Endothelial cell of umbilical vein (primary cell): ENCODE measurements at regions of chr7 and their contacts with region 1.

Region 1: GRCh38 chr7:43834463-43835251 is 34.7 kb downstream of the MRPS24 start:
- DNase-seq: peak; percentile 22
- H3K4me3 ChIP-seq: no peak overlapping the region
- H3K27ac ChIP-seq: no peak overlapping the region
- H3K4me1 ChIP-seq: no peaks in the 10 kb centered on the region
- H3K27me3 ChIP-seq: peaks cover 0 to 3% of the 10 kb centered on the region in 2 experiments
- CTCF ChIP-seq: no peak
- POLR2A ChIP-seq: no peak

Region 2: GRCh38 chr7:43454936-43455518 is 379.6 kb before region 1 on chr7:
- CTCF ChIA-PET with region 1: interaction called, 3 read pairs
- POLR2A ChIA-PET with region 1: no interaction called
- dilution Hi-C with region 1: no loop called
- intact Hi-C with region 1: loop called (anchors 10 kb)
- DNase-seq: peak; percentile 68
- H3K4me3 ChIP-seq: peak overlapping the region in 1 of 3 experiments; percentile 39
- H3K27ac ChIP-seq: no peak overlapping the region
- H3K4me1 ChIP-seq: peaks cover 3% of the 10 kb centered on the region
- H3K27me3 ChIP-seq: peaks cover 9 to 29% of the 10 kb centered on the region in 2 experiments
- CTCF ChIP-seq: peak; percentile 30 to 50
- POLR2A ChIP-seq: no peak

Region 3: DNA sequence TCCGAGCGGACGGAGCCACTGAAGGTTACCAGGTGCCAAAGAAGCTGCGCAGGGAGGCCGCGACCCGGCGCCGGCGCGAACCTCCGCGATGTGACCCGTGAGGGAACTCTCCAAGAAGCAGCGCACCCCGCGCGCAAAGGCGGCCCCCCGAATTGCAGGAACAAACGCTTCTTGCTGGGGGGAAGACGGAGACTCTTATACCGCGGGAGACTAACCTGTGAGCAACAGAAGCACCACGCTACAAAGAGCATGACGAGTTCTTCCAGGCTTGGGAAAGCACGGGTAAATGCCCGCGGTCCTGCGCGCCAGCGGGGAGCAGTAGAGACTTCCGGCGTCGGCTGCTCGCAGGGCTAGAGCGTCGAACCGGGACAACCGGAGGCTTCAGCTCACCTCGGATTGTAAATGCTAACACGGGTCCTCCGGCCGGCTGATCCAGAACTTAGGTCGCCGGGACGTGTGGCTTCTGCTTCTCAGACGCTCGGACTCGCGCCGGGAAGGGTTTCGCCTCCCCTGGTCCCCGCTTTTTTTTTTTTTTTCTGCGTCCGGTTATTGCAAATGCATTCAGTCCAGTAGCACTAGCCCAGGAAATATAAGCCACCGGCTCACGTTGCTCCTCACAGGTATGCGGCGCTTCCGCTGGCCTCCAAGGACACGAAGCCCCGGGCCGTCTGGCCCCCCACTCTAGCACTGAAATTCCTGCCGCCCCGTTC is 105.3 kb before region 1 on chr7 and contains the start of gene COA1:
- CTCF ChIA-PET with region 1: interaction called, 7 read pairs
- POLR2A ChIA-PET with region 1: no interaction called
- dilution Hi-C with region 1: no loop called
- intact Hi-C with region 1: loop called (anchors 1 kb)
- DNase-seq: peak; percentile 93
- H3K4me3 ChIP-seq: peak within 1 kb of the TSS; percentile 13 to 66 (median 58)
- H3K27ac ChIP-seq: peak within 1 kb of the TSS; percentile 48
- H3K4me1 ChIP-seq: peaks cover 14% of the 10 kb centered on the region
- H3K27me3 ChIP-seq: peaks cover 0 to 3% of the 10 kb centered on the region in 2 experiments
- CTCF ChIP-seq: no peak
- POLR2A ChIP-seq: peak; percentile 86
- total RNA-seq, gene COA1: 55.1 and 58.0 TPM in 2 replicates